ENCODE measurements at regions of chr7 and their contacts with region 1.

Region 1: DNA sequence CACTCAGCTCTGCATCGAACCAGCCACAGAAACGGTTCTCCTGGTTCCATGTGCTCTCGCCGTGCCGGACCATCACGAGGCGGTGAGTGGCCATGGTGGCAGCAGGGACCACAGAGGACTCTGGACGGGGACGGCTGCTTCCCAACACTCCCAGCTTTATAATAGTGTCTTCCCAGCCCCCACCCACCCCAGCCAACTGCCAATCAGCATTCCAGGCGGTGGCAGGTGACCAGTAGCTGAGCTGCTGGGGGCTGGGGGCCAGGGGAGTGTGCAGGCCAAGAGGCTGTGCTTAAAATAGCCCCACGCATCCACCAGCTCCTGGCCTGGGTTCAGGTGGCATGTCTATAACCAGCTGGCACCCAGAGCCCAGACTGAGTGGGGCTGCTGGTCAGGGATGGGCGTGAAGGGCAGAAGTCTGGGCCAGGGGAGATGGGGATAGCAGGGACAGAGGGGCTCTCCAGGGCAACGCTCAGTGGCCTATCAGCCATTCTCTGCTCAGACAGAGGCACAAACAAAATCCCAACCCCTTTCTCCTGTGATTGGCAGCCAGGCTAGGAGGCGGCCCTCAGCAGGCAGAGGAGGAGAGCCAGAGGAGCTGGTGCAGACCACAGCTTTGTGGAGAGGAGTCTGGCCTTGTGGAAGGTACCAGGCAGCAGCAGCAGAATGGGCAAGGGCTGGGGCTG is at the start of gene PGAM2:
- DNase-seq: peak; percentile 35
- ATAC-seq: peak; percentile 43
- H3K4me3 Mint-ChIP-seq: no peak within 1 kb of the TSS
- H3K27ac Mint-ChIP-seq: no peak within 1 kb of the TSS
- H3K4me1 Mint-ChIP-seq: peaks cover 29% of the 10 kb centered on the region
- H3K27me3 Mint-ChIP-seq: no peaks in the 10 kb centered on the region
- CTCF ChIP-seq: no peak
- total RNA-seq, gene PGAM2: 0.49 TPM in 1 of 2 experiments, not detected in the other

Region 2: DNA sequence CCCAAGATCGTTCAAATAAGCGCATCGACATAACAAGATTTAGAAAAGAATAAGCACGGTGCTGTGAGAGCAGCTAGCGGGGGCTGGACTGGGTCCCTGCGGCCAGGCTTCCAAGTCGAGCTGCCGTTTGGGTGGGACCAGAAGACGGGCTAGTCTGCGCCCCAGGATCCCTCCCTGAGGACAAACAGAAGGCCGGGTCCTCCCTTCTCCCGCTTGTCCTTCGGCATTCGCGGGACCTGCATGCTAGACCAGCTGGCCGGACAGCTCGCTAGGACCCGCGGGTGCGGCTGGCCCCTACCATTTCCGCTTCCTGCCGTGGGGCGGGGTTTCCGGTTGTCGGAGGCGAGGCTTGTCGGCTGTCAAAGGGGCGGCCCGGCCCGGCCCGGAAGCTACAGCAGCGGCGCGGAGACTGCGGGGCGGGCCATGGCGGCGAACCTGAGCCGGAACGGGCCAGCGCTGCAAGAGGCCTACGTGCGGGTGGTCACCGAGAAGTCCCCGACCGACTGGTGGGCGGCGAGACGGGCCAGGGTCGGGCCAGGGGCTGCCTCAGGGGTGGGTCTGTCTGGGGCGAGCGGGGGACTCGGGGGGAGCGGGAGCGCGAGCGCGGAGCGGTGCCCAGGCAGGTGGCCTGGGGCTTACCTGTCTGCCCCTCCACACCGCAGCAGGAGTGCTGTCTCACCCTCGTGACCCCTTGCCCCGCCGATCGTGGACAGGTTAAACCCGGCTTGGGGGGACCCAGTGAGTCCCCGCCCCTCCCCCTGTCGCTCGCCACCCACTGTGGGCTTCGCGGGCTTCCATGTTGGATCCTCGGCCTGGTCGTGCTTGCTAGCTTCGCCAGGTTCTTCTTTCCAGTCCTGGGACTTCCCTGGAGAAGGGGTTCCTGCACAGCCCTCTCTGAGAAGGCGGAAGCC is 21.0 kb before region 1 on chr7 and contains the start of gene DBNL:
- CTCF ChIA-PET with region 1: interaction called, 3 read pairs
- POLR2A ChIA-PET with region 1: interaction called, 54 read pairs
- intact Hi-C with region 1: no loop called
- DNase-seq: peak; percentile 94
- ATAC-seq: peak; percentile 65
- H3K4me3 Mint-ChIP-seq: peak within 1 kb of the TSS; percentile 91
- H3K27ac Mint-ChIP-seq: peak within 1 kb of the TSS; percentile 91
- H3K4me1 Mint-ChIP-seq: peaks cover 46% of the 10 kb centered on the region
- H3K27me3 Mint-ChIP-seq: no peaks in the 10 kb centered on the region
- CTCF ChIP-seq: no peak
- total RNA-seq, gene DBNL: 108 to 110 TPM

Region 3: GRCh38 chr7:44050915-44051560 is 14.5 kb before region 1 on chr7:
- CTCF ChIA-PET with region 1: interaction called, 3 read pairs
- POLR2A ChIA-PET with region 1: interaction called, 54 read pairs
- intact Hi-C with region 1: no loop called
- DNase-seq: no peak
- ATAC-seq: no peak
- H3K4me3 Mint-ChIP-seq: no peak overlapping the region
- H3K27ac Mint-ChIP-seq: peak overlapping the region; percentile 57
- H3K4me1 Mint-ChIP-seq: peaks cover 62% of the 10 kb centered on the region
- H3K27me3 Mint-ChIP-seq: no peaks in the 10 kb centered on the region
- CTCF ChIP-seq: no peak

Region 4: DNA sequence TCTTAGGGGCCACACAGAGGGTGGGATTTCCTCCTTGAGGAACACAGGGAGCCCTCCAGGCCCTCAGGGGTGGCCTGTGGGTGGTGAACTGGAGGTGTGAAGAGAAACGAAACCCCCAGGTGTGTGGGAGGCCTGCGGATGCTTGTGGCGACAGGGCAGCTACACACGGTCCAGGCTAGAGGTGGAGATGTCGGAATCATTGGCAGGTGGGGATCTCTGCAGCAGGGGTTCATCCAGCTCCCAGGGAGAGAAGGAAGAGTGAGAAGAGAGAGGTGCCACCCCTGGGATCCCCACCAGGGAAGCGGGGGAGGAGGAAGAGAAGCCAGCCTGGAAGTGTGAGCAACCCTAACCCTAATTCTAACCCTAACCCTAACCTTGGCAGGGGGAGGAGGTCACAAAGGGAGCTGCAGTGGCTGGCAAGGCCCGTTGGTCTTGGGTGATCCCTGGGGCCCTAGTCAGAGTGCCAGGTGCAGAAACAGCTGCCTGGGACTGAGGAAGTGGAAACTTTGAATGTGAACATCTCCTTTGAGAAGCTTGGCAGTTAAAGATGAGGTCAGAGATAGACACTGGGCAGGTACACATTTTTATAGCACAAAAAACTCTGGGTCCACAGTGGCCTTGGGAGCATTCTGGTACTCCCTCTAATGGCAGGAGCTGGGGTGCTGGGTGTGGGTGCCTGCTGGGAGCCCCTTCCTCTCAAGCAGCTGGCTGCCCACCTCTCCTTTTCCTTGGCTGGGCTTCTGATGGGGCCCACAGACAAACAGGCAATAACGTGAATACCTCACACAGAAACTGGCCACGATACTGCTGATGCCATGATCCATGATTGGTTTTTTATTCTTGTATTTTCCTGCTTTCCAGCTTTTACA is 31.7 kb after region 1 on chr7:
- CTCF ChIA-PET with region 1: no interaction called
- POLR2A ChIA-PET with region 1: interaction called, 10 read pairs
- intact Hi-C with region 1: no loop called
- DNase-seq: peak; percentile 81
- ATAC-seq: peak; percentile 86
- H3K4me3 Mint-ChIP-seq: peak overlapping the region; percentile 14
- H3K27ac Mint-ChIP-seq: peak overlapping the region; percentile 86
- H3K4me1 Mint-ChIP-seq: peaks cover 25% of the 10 kb centered on the region
- H3K27me3 Mint-ChIP-seq: no peaks in the 10 kb centered on the region
- CTCF ChIP-seq: no peak

Region 5: DNA sequence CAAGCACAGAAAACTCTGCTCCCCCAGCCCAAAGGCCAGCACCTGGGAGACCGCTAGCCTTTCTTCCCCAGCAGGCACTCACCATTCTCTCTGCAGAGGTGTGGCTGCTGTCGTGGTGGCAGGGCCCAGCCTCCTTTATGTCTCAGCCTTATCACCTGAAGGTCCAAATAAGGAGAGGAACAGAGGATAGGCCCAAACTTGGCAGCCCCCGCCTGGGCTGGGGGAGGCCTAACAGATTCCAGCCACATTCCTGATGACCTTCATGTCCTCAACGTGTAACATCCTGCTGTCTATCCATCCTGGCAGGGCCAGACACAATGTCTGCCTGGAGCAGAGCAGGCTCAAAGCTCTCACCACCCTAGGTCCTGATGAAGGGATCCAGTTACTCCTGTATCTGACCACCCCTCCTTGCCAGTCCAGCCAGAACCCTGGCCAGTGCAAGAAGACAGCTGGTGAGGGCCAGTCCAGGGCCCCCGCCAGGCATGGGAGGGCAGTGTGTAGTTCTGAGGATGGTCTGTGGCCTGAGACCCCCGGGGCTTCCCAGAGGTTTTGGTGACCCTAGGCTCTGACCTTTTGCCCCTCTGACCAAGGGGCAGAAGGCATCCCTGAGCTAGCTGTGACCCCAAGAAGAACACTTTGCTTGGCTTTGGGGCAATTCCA is 75.8 kb after region 1 on chr7 and contains the start of gene MYL7:
- CTCF ChIA-PET with region 1: no interaction called
- POLR2A ChIA-PET with region 1: no interaction called
- intact Hi-C with region 1: no loop called
- DNase-seq: no peak
- ATAC-seq: no peak
- H3K4me3 Mint-ChIP-seq: no peak within 1 kb of the TSS
- H3K27ac Mint-ChIP-seq: no peak within 1 kb of the TSS
- H3K4me1 Mint-ChIP-seq: peaks cover 8% of the 10 kb centered on the region
- H3K27me3 Mint-ChIP-seq: no peaks in the 10 kb centered on the region
- CTCF ChIP-seq: no peak
- total RNA-seq, gene MYL7: not detected

Region 6: GRCh38 chr7:44325811-44326241 is 260.2 kb after region 1 on chr7:
- CTCF ChIA-PET with region 1: no interaction called
- POLR2A ChIA-PET with region 1: no interaction called
- intact Hi-C with region 1: no loop called
- DNase-seq: peak; percentile 27
- ATAC-seq: peak; percentile 55
- H3K4me3 Mint-ChIP-seq: peak overlapping the region; percentile 74
- H3K27ac Mint-ChIP-seq: no peak overlapping the region
- H3K4me1 Mint-ChIP-seq: peaks cover 7% of the 10 kb centered on the region
- H3K27me3 Mint-ChIP-seq: peaks cover 28% of the 10 kb centered on the region
- CTCF ChIP-seq: no peak